Panc1 (cell line): ENCODE measurements at regions of chr16 and their contacts with region 1.

Region 1: DNA sequence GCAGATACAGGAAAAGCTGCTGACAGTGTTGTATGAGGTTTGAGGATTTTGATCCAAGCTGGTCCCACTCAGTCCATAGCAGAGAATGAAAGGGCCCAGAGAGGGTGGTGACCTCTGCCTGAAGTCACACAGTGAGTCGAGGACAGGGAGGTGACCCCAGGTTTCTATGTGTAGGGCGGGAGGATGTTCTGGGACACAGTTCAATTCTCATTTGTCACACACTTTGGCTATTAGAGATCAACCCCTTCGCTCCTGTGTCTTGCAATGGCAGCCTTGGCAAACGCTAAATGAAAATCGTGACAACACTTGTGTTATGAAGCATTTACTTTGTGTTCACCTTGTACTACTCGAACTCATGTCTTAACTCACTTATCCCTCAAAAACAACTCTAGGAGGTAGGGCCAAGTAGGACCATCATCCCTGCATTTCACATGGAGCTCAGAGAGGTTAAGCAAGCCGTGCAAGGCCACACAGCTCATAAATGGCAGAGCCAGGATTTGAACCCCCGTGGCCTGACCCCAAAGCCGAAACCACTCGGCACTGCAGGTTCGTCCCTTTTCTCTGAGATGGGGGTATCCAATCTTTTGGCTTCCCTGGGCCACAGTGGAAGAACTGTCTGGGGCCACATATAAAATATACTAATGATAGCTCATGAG is 10.2 kb downstream of the DEXI start:
- DNase-seq: no peak
- ATAC-seq: no peak
- H3K4me3 ChIP-seq: no peak overlapping the region
- H3K27ac ChIP-seq: no peak overlapping the region
- H3K4me1 ChIP-seq: no peaks in the 10 kb centered on the region
- H3K27me3 ChIP-seq: no peaks in the 10 kb centered on the region
- CTCF ChIP-seq: no peak

Region 2: DNA sequence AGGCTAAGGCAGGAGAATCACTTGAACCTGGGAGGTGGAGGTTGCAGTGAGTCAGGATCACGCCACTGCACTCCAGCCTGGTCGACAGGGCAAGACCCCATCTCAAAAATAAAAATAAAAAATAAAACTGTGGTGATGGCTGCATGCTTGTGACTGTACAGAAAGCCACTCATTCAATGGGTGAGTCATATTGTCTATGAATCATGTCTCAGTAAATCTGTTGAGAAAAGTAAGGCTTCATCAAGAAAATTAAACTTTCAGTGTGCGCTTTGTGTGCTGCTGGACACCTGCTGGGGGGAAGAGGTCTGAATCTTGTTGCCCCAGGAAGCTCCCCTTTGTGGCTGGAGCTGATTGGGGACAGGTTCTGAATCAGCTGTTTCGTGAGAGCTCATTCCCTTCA is 177.2 kb before region 1 on chr16:
- CTCF ChIA-PET with region 1: no interaction called
- POLR2A ChIA-PET with region 1: no interaction called
- in situ Hi-C with region 1: no loop called
- intact Hi-C with region 1: no loop called
- DNase-seq: no peak
- ATAC-seq: peak; percentile 77; the same call in 1 of the 2 replicates
- H3K4me3 ChIP-seq: no peak overlapping the region
- H3K27ac ChIP-seq: no peak overlapping the region
- H3K4me1 ChIP-seq: no peaks in the 10 kb centered on the region
- H3K27me3 ChIP-seq: no peaks in the 10 kb centered on the region
- CTCF ChIP-seq: no peak

Region 3: DNA sequence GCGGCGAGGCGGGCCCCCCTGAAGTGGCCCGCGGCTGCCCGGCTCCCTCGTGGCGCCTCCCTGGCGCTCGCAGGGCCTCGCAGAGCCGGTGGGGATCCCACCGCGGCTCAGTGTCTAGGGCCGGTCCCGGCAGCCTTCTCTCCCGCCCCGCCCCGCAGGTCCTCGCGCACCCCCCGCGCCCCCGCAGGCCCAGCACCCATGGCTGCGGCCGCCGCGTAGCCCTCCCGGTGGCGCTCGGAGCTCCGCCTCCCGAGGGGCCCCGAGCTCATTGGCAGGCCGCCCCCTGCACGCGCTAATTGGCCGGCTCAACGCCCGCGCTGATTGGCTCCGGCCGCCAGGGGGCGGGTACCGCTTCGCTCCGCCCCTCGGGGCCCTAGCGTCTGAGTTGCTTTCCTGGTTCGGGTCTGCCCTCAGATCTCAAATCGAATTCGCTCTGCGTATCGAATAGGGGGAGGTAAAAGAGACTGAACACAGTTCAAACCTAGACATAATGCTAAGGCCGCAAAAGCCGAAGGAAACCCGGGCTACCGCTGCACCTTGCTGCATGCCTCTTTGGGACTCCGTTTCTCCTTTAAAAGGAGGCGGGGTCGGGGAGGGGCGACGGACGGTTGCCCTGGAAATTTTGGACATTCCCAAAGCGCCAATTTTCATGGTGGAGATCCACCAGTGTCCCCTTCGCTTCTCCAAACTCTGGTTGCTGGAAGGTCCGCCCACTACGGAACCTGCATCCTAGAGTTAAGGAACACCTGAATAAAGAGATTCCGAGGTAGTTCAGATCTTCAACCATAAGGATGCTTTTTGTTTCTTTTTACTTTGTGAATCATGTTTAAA is 10.3 kb after region 1 on chr16 and contains the start of gene DEXI:
- CTCF ChIA-PET with region 1: interaction called, 3 read pairs
- POLR2A ChIA-PET with region 1: interaction called, 10 read pairs
- in situ Hi-C with region 1: no loop called
- intact Hi-C with region 1: no loop called
- DNase-seq: peak; percentile 65
- ATAC-seq: peak; percentile 87
- H3K4me3 ChIP-seq: peak within 1 kb of the TSS; percentile 70 to 71
- H3K27ac ChIP-seq: peak within 1 kb of the TSS; percentile 95
- H3K4me1 ChIP-seq: peaks cover 45% of the 10 kb centered on the region
- H3K27me3 ChIP-seq: no peaks in the 10 kb centered on the region
- CTCF ChIP-seq: no peak
- total RNA-seq, gene DEXI: 32.2 TPM